ENCODE measurements at regions of chr15 and their contacts with region 1.

Region 1: DNA sequence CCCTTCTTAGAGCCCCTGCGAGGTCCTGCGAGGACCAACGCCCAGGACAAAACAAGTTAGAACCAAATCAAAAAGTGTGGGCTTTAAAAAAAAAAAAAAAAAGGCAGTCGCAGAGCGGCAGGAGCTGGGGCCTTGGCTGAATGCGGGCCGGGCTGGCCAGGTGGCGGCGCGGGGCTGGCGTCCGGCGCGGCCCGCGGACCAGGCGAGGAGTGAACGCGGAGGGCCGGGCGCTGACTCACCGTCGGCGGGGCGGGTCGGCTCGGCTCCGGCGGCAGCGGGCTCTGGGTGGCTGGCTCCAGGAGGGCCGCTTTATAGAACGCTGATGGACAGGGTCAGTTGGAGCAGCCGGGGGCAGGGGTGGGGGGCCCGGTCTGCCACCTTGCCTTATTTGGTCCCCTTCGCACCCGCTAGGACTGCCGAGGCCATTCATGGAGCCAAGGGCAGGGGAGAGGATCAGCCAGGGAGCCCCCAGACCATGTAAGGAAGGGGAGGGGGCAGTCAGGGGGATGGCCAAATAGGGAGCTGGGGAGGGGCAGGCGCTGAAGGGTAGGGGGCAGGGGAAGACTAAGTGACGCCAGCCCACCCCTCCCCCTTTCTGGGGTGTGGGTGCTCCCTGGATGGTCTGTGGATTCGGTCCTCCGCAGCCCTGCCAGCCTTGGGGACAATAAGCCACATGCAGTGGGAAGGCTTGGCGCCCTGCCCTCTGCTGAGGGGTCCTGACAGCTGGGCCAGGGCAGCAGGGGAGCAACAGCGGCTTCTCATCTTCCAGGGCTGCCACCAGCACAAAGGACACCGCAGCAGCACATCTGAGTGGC is at the start of gene ACTC1:
- DNase-seq: peak; percentile 76 to 79
- ATAC-seq: peak; percentile 80 to 90 (median 84)
- H3K4me3 ChIP-seq: peak within 1 kb of the TSS; percentile 64
- H3K27ac ChIP-seq: peak within 1 kb of the TSS; percentile 82
- H3K4me1 ChIP-seq: peaks cover 32% of the 10 kb centered on the region
- H3K27me3 ChIP-seq: no peaks in the 10 kb centered on the region
- CTCF ChIP-seq: peak; percentile 22
- total RNA-seq, gene ACTC1: 219 to 3,379 (median 1,101) TPM

Region 2: DNA sequence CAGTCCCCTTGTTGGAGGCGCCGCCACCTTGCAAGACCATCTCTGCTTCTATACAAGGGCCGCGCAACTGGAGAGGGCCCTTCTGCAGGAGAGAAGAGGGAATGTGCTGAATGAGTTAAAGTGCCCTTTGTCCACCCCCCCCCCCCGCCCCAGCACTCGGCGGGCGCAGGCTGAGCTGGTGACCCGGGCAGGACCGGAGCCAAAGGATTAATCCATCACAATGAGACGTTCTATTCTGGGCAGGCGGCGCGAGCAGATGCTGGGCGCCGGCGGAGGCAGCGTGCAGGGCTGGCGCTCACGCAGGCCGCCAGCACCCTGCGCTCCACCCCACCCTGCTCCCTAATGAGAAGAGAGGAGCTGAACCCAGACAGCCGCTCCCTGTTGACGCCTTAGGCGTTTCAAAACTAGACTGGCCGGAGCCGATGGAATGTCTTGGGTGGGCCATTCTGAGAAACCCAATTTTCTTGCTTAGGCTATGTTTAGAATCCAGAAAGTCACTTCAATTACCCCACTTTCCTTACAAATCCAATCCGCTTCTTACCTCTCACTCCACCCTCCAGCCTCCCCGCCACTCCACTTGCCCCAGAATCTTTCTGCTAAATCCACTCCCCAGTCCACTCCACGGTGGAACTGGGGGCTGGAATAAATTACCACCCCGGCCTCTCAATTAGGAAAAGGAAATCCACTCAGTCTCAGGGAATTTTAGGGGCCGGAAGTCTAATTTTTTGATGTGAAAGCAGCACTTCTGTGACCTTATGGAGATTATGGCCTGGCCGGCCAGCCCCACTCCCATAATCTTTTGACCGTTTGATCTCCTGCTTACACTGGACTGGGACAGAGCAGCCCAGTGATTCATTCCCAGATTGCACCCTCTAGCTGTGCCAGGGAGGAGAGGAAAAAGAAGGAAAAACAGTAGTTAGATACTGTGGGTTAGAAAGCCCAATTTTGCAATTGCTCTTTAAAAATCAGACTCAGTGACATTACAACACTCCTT is 73.4 kb before region 1 on chr15:
- intact Hi-C with region 1: loop called in 1 of 2 experiments (anchors 5 kb)
- DNase-seq: peak; percentile 63 to 83
- ATAC-seq: peak; percentile 67 to 78 (median 75)
- H3K4me3 ChIP-seq: peak overlapping the region; percentile 46
- H3K27ac ChIP-seq: peak overlapping the region; percentile 77
- H3K4me1 ChIP-seq: peaks cover 68% of the 10 kb centered on the region
- H3K27me3 ChIP-seq: no peaks in the 10 kb centered on the region
- CTCF ChIP-seq: no peak

Region 3: DNA sequence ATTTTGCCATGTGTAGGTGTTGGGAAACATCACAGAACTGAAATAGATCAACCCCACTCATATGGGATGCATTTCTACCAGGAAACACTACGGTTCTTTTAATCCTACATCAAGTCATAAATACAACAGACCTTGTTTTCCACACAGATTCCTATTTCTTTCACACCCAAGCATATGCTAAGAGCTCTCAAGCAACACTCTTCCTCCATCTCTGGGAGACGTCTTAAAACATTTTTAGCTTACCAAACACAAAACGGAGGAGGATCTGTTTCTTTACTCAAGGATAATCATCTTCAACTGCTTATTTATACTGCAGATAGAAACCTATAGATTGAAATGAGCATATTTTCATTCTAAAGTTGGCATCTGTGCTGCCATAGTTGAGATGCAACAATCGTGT is 45.8 kb before region 1 on chr15:
- intact Hi-C with region 1: no loop called
- DNase-seq: no peak
- ATAC-seq: no peak
- H3K4me3 ChIP-seq: no peak overlapping the region
- H3K27ac ChIP-seq: no peak overlapping the region
- H3K4me1 ChIP-seq: no peaks in the 10 kb centered on the region
- H3K27me3 ChIP-seq: peaks cover 0 to 34% (median 10%) of the 10 kb centered on the region in 3 donors
- CTCF ChIP-seq: no peak

Region 4: DNA sequence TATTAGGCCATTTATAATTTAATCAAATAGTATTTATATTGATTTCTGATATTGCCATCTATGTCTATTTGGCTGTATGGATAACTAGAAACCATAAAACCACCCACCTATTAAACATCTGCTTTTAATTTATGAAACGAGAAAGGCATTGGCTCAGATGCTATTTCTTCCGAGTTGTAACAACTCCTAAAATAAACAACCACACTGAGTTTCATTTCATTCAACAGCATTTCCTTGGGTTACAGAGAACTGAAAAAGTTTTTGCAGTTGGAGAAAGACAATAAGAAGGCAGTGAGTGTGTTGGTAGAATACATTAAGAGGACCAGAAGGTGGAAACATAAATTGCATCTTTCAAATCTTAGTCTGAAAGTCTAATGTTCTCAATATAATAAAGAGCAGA is 95.0 kb after region 1 on chr15:
- intact Hi-C with region 1: loop called in 1 of 2 experiments (anchors 5 kb)
- DNase-seq: no peak
- ATAC-seq: no peak
- H3K4me3 ChIP-seq: no peak overlapping the region
- H3K27ac ChIP-seq: no peak overlapping the region
- H3K4me1 ChIP-seq: no peaks in the 10 kb centered on the region
- H3K27me3 ChIP-seq: no peaks in the 10 kb centered on the region
- CTCF ChIP-seq: no peak

Region 5: DNA sequence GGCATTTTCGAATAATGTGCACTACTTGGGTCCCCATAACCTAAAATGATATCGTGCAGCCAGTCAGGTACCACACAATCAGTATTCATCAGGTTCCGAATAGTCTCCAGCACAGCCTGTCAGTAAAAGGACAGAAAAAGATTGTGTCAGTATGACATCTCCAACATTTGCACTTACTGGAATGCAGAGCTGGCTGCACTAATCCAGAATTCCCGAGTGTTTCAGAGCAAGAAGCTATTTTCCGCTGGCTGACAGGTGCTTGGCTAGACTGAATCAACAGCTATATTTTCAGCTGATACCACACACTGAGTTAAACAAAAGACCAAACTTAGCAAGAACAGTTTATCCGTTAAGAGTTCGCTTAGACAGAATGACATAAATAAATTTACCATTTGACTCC is 105.3 kb after region 1 on chr15:
- intact Hi-C with region 1: loop called in 1 of 2 experiments (anchors 5 kb)
- DNase-seq: no peak
- ATAC-seq: peak; percentile 93 to 97 (median 96)
- H3K4me3 ChIP-seq: peak overlapping the region; percentile 10
- H3K27ac ChIP-seq: peak overlapping the region; percentile 71
- H3K4me1 ChIP-seq: peaks cover 15% of the 10 kb centered on the region
- H3K27me3 ChIP-seq: no peaks in the 10 kb centered on the region
- CTCF ChIP-seq: no peak